Activated CD8-positive, alpha-beta T cell treated with anti-CD3 and anti-CD28 coated beads, Interleukin-2, amount 10 ng/mL, durations not matched to agents 7 days and 5 days (primary cell): ENCODE measurements at regions of chr12 and their contacts with region 1.

Region 1: GRCh38 chr12:93502802-93503623 is 35.7 kb downstream of the MRPL42 start:
- DNase-seq: peak; percentile 78
- ATAC-seq: no peak
- H3K4me3 Mint-ChIP-seq: no peak overlapping the region
- H3K27ac Mint-ChIP-seq: no peak overlapping the region
- H3K4me1 Mint-ChIP-seq: peaks cover 17% of the 10 kb centered on the region
- H3K27me3 Mint-ChIP-seq: no peaks in the 10 kb centered on the region

Region 2: GRCh38 chr12:93484315-93484981 is 18.6 kb before region 1 on chr12:
- CTCF ChIA-PET with region 1: interaction called, 10 read pairs
- POLR2A ChIA-PET with region 1: no interaction called
- DNase-seq: no peak
- ATAC-seq: no peak
- H3K4me3 Mint-ChIP-seq: no peak overlapping the region
- H3K27ac Mint-ChIP-seq: no peak overlapping the region
- H3K4me1 Mint-ChIP-seq: no peaks in the 10 kb centered on the region
- H3K27me3 Mint-ChIP-seq: no peaks in the 10 kb centered on the region

Region 3: GRCh38 chr12:93541578-93542225 is 38.7 kb after region 1 on chr12:
- CTCF ChIA-PET with region 1: interaction called, 10 read pairs
- POLR2A ChIA-PET with region 1: no interaction called
- DNase-seq: no peak
- ATAC-seq: peak; percentile 41
- H3K4me3 Mint-ChIP-seq: peak overlapping the region; percentile 5
- H3K27ac Mint-ChIP-seq: peak overlapping the region; percentile 75
- H3K4me1 Mint-ChIP-seq: peaks cover 60% of the 10 kb centered on the region
- H3K27me3 Mint-ChIP-seq: no peaks in the 10 kb centered on the region

Region 4: GRCh38 chr12:93563807-93564538 is 61.0 kb after region 1 on chr12:
- CTCF ChIA-PET with region 1: interaction called, 15 read pairs
- POLR2A ChIA-PET with region 1: no interaction called
- DNase-seq: peak; percentile 45
- ATAC-seq: peak; percentile 60
- H3K4me3 Mint-ChIP-seq: no peak overlapping the region
- H3K27ac Mint-ChIP-seq: no peak overlapping the region
- H3K4me1 Mint-ChIP-seq: peaks cover 10% of the 10 kb centered on the region
- H3K27me3 Mint-ChIP-seq: no peaks in the 10 kb centered on the region

Region 5: DNA sequence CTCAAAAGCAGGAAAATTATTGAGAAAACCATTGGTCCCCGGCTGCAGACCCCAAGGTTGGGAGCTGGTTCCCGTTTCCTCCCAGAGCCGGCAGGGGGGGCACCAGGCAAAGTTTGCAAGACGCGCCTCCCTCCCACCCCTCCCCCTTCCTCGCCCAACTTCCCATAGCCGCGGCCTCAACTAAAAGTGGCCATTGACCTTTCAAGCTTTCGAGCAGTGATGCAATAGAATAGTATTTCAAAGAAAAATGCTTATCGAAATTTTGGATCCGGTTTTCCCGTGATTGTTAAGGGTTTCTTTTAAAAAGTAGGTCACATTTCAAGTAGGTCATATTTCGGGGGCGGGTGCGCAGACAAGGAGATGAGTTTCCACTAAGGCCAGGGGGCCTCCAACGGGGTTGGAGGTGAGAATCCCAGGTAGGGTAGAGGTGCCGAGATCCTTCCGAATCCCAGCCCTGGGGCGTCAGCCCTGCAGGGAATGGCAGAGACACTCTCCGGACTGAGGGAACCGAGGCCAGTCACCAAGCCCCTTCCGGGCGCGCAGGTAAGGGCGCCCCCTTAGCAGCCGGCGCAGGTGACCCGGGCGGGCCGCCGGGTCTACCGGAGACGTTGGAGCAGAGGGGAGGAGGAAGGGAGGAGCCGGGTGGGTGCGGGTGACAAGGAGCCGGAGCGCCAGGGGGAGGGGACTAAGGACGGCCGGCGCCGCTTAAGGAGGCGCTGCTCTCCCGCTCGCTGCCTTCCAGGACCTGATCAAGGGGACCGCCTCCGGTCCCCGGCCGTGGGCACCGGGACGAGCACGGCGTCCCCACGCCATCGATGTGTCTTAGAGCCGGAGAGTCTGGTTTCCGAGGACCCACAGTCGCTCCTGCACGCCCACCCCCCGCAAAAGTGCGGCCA is 66.9 kb after region 1 on chr12:
- CTCF ChIA-PET with region 1: interaction called, 15 read pairs
- POLR2A ChIA-PET with region 1: no interaction called
- DNase-seq: peak; percentile 87
- ATAC-seq: peak; percentile 62
- H3K4me3 Mint-ChIP-seq: peak overlapping the region; percentile 91
- H3K27ac Mint-ChIP-seq: peak overlapping the region; percentile 90
- H3K4me1 Mint-ChIP-seq: peaks cover 37% of the 10 kb centered on the region
- H3K27me3 Mint-ChIP-seq: peaks cover 7% of the 10 kb centered on the region

Region 6: GRCh38 chr12:93742110-93742934 is 239.3 kb after region 1 on chr12:
- CTCF ChIA-PET with region 1: interaction called, 13 read pairs
- POLR2A ChIA-PET with region 1: no interaction called
- DNase-seq: peak; percentile 74
- ATAC-seq: peak; percentile 98
- H3K4me3 Mint-ChIP-seq: peak overlapping the region; percentile 81
- H3K27ac Mint-ChIP-seq: peak overlapping the region; percentile 92
- H3K4me1 Mint-ChIP-seq: peaks cover 34% of the 10 kb centered on the region
- H3K27me3 Mint-ChIP-seq: peaks cover 3% of the 10 kb centered on the region

Region 7: GRCh38 chr12:93979189-93979588 is 476.2 kb after region 1 on chr12:
- CTCF ChIA-PET with region 1: interaction called, 14 read pairs
- POLR2A ChIA-PET with region 1: no interaction called
- DNase-seq: peak; percentile 50
- ATAC-seq: no peak
- H3K4me3 Mint-ChIP-seq: no peak overlapping the region
- H3K27ac Mint-ChIP-seq: no peak overlapping the region
- H3K4me1 Mint-ChIP-seq: peaks cover 31% of the 10 kb centered on the region
- H3K27me3 Mint-ChIP-seq: peaks cover 5% of the 10 kb centered on the region